Sigmoid colon (tissue), 7 donors: ENCODE measurements at regions of chr12 and their contacts with region 1.

Region 1: GRCh38 chr12:119412811-119413794 is 78.6 kb downstream of the CCDC60 start:
- DNase-seq: peak; percentile 82
- H3K4me3 ChIP-seq: no peak overlapping the region
- H3K27ac ChIP-seq: peak overlapping the region in 2 of 4 donors; percentile 41 to 62
- H3K4me1 ChIP-seq: peaks cover 0 to 28% (median 20%) of the 10 kb centered on the region in 4 donors
- H3K27me3 ChIP-seq: no peaks in the 10 kb centered on the region
- CTCF ChIP-seq: peak; percentile 83 to 87 (median 85)
- EP300 ChIP-seq: no peak
- POLR2A ChIP-seq: no peak

Region 2: GRCh38 chr12:118404876-118405521 is 1008.1 kb before region 1 on chr12:
- intact Hi-C with region 1: loop called (anchors 10 kb)
- DNase-seq: peak; percentile 74
- H3K4me3 ChIP-seq: no peak overlapping the region
- H3K27ac ChIP-seq: peak overlapping the region; percentile 17 to 40 (median 27)
- H3K4me1 ChIP-seq: peaks cover 0 to 29% (median 14%) of the 10 kb centered on the region in 4 donors
- H3K27me3 ChIP-seq: no peaks in the 10 kb centered on the region
- CTCF ChIP-seq: peak; percentile 62 to 73 (median 72)
- EP300 ChIP-seq: no peak
- POLR2A ChIP-seq: no peak

Region 3: GRCh38 chr12:119115296-119115905 is 297.7 kb before region 1 on chr12:
- intact Hi-C with region 1: loop called (anchors 1 kb)
- DNase-seq: no peak
- H3K4me3 ChIP-seq: no peak overlapping the region
- H3K27ac ChIP-seq: no peak overlapping the region
- H3K4me1 ChIP-seq: peaks cover 0 to 9% (median 2%) of the 10 kb centered on the region in 4 donors
- H3K27me3 ChIP-seq: no peaks in the 10 kb centered on the region
- CTCF ChIP-seq: peak; percentile 69 to 95 (median 84)
- EP300 ChIP-seq: no peak
- POLR2A ChIP-seq: no peak

Region 4: GRCh38 chr12:119208622-119209061 is 204.5 kb before region 1 on chr12:
- intact Hi-C with region 1: loop called (anchors 5 kb)
- DNase-seq: peak; percentile 94
- H3K4me3 ChIP-seq: no peak overlapping the region
- H3K27ac ChIP-seq: peak overlapping the region; percentile 70 to 99 (median 82)
- H3K4me1 ChIP-seq: peaks cover 0 to 57% (median 43%) of the 10 kb centered on the region in 4 donors
- H3K27me3 ChIP-seq: no peaks in the 10 kb centered on the region
- CTCF ChIP-seq: no peak
- EP300 ChIP-seq: peak in 3 of 4 donors; percentile 47 to 72 (median 64)
- POLR2A ChIP-seq: no peak

Region 5: DNA sequence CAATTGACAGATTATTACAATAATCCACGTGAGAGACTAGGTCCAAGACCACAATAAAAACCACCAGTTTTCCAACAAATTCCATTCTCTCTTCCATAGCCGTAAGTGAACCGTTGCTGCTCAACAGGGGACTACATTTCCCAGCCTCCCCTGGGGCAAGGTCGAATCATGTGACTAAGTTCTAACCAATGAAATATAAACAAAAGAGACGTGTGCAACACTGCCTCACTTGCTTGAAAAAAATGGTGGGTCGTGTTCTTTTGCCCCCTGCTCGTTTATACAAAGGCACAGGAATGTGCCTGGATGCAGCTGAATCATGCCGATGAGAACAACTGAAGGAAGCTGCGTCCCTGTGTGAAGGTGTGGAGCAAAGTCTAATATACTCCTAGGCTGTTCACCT is 183.3 kb before region 1 on chr12:
- intact Hi-C with region 1: no loop called
- DNase-seq: no peak
- H3K4me3 ChIP-seq: peak overlapping the region in 2 of 4 donors; percentile 14 to 26
- H3K27ac ChIP-seq: no peak overlapping the region
- H3K4me1 ChIP-seq: no peaks in the 10 kb centered on the region
- H3K27me3 ChIP-seq: no peaks in the 10 kb centered on the region
- CTCF ChIP-seq: no peak
- EP300 ChIP-seq: no peak
- POLR2A ChIP-seq: no peak

Region 6: DNA sequence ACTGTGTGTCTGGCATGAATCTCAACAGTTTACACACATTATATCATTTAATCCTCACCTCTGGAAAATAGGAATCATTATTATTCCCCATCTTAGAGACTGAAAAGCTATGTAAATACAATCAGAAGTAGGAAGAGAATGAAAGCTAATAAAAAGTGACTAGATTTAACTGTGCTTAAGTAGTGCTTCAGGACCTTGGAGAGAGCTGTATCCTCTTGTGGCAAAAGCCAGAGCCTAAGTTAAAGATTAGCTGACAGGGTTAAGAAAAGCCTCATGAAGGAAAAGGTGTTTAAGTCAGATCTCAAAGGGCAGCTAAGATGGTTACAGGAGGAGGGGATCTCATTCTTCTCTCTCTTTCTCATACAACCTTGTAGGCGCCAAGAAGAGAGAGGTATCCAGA is 115.1 kb after region 1 on chr12:
- intact Hi-C with region 1: no loop called
- DNase-seq: no peak
- H3K4me3 ChIP-seq: no peak overlapping the region
- H3K27ac ChIP-seq: no peak overlapping the region
- H3K4me1 ChIP-seq: no peaks in the 10 kb centered on the region
- H3K27me3 ChIP-seq: no peaks in the 10 kb centered on the region
- CTCF ChIP-seq: no peak
- EP300 ChIP-seq: no peak
- POLR2A ChIP-seq: no peak

Region 7: GRCh38 chr12:119544765-119545625 is 131.9 kb after region 1 on chr12:
- intact Hi-C with region 1: loop called (anchors 10 kb)
- DNase-seq: peak; percentile 72
- H3K4me3 ChIP-seq: no peak overlapping the region
- H3K27ac ChIP-seq: no peak overlapping the region
- H3K4me1 ChIP-seq: no peaks in the 10 kb centered on the region
- H3K27me3 ChIP-seq: peaks cover 0 to 9% (median 0%) of the 10 kb centered on the region in 3 donors
- CTCF ChIP-seq: peak; percentile 57 to 86 (median 78)
- EP300 ChIP-seq: no peak
- POLR2A ChIP-seq: no peak